Mammary epithelial cell (primary cell): ENCODE measurements at regions of chr11 and their contacts with region 1.

Region 1: DNA sequence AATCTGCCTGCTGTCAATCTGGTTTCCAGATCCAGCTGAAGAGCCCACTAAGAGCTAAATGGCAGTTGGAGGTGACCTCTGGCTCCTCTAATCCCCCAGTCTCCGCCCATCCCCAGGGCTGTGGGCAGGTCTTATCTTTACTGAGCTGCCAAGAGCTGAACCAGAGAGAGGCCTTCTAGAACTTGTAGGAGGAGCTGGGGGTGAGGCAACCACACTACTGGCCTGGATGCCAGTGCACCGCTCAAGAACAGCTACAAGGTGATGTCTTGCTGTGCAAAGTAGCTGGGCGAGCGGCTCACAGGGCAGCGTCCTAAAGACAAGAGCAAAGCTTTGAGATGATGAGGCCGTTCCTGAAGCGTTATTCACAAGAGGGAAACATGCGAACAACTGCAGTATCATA is 374.6 kb downstream of the CTTN start:
- DNase-seq: no peak
- H3K4me3 ChIP-seq: no peak overlapping the region
- H3K27ac ChIP-seq: no peak overlapping the region
- H3K4me1 ChIP-seq: no peaks in the 10 kb centered on the region
- H3K27me3 ChIP-seq: no peaks in the 10 kb centered on the region
- CTCF ChIP-seq: no peak

Region 2: GRCh38 chr11:70669871-70670675 is 102.9 kb before region 1 on chr11:
- CTCF ChIA-PET with region 1: no interaction called
- dilution Hi-C with region 1: loop called (anchors 5 kb)
- in situ Hi-C with region 1: no loop called
- intact Hi-C with region 1: no loop called
- DNase-seq: no peak
- H3K4me3 ChIP-seq: no peak overlapping the region
- H3K27ac ChIP-seq: no peak overlapping the region
- H3K4me1 ChIP-seq: no peaks in the 10 kb centered on the region
- H3K27me3 ChIP-seq: no peaks in the 10 kb centered on the region
- CTCF ChIP-seq: no peak

Region 3: GRCh38 chr11:70712471-70712870 is 60.5 kb before region 1 on chr11:
- CTCF ChIA-PET with region 1: no interaction called
- dilution Hi-C with region 1: loop called (anchors 5 kb)
- in situ Hi-C with region 1: no loop called
- intact Hi-C with region 1: no loop called
- DNase-seq: no peak
- H3K4me3 ChIP-seq: no peak overlapping the region
- H3K27ac ChIP-seq: no peak overlapping the region
- H3K4me1 ChIP-seq: no peaks in the 10 kb centered on the region
- H3K27me3 ChIP-seq: peaks cover 3% of the 10 kb centered on the region
- CTCF ChIP-seq: no peak

Region 4: GRCh38 chr11:70804139-70804837 is 31.3 kb after region 1 on chr11:
- CTCF ChIA-PET with region 1: no interaction called
- dilution Hi-C with region 1: loop called (anchors 5 kb)
- in situ Hi-C with region 1: no loop called
- intact Hi-C with region 1: no loop called
- DNase-seq: no peak
- H3K4me3 ChIP-seq: no peak overlapping the region
- H3K27ac ChIP-seq: no peak overlapping the region
- H3K4me1 ChIP-seq: peaks cover 4% of the 10 kb centered on the region
- H3K27me3 ChIP-seq: no peaks in the 10 kb centered on the region
- CTCF ChIP-seq: no peak